Activated CD4-positive, alpha-beta T cell treated with anti-CD3 and anti-CD28 coated beads for 36 hours (primary cell): ENCODE measurements at regions of chr16 and their contacts with region 1.

Region 1: GRCh38 chr16:84084570-84085270 is 32.0 kb downstream of the MBTPS1 start:
- DNase-seq: peak; percentile 83
- ATAC-seq: peak; percentile 79
- H3K4me3 Mint-ChIP-seq: no peak overlapping the region
- H3K27ac Mint-ChIP-seq: no peak overlapping the region
- H3K4me1 Mint-ChIP-seq: peaks cover 40% of the 10 kb centered on the region
- H3K27me3 Mint-ChIP-seq: no peaks in the 10 kb centered on the region

Region 2: DNA sequence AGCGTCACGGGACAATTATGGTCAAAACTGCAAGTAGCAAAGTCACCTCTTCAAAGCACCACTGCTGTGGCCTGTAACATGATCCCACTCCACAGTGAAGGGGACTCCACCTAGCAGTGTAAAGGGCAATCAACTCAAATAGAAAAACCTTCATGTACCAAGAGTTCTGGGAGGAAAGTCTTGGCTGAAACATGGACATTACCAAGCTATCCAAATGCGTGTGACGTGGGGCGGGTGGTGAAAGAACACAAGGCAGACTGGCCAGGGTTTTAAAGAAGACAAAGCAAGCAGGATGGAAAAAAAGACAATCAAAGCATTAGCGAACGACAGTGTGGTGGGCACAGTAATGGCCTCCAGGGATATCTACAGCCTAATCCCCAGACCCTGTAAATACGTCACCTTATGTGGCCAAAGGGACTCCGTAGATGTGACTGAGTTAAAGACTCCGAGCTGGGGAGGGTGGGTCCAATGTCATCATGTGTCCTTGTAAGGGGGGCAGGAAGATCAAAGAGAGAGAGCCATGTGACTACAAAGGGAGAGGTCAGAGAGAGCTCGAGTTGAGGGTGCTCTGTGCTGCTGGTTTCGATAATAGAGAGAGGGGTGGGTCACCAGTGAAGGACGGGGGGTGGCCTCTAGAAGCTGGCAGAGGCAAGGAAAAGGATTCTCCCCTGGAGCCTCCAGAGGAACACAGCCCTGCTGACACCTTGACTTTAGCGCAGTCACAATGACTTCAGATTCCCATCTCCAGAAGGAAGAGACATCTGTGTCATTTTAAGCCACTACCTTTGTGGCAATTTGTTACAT is 54.3 kb after region 1 on chr16:
- CTCF ChIA-PET with region 1: interaction called, 5 read pairs
- POLR2A ChIA-PET with region 1: no interaction called
- intact Hi-C with region 1: loop called in 1 of 2 experiments (anchors 2 kb)
- DNase-seq: peak; percentile 59
- ATAC-seq: peak; percentile 96
- H3K4me3 Mint-ChIP-seq: no peak overlapping the region
- H3K27ac Mint-ChIP-seq: peak overlapping the region; percentile 32
- H3K4me1 Mint-ChIP-seq: peaks cover 49% of the 10 kb centered on the region
- H3K27me3 Mint-ChIP-seq: no peaks in the 10 kb centered on the region

Region 3: GRCh38 chr16:84175350-84176081 is 90.8 kb after region 1 on chr16:
- CTCF ChIA-PET with region 1: interaction called, 100 read pairs
- POLR2A ChIA-PET with region 1: no interaction called
- intact Hi-C with region 1: loop called (anchors 1 kb)
- DNase-seq: peak; percentile 81
- ATAC-seq: peak; percentile 93
- H3K4me3 Mint-ChIP-seq: no peak overlapping the region
- H3K27ac Mint-ChIP-seq: no peak overlapping the region
- H3K4me1 Mint-ChIP-seq: peaks cover 19% of the 10 kb centered on the region
- H3K27me3 Mint-ChIP-seq: peaks cover 2% of the 10 kb centered on the region

Region 4: GRCh38 chr16:84308120-84308519 is 223.4 kb after region 1 on chr16:
- CTCF ChIA-PET with region 1: interaction called, 9 read pairs
- POLR2A ChIA-PET with region 1: no interaction called
- intact Hi-C with region 1: loop called in 1 of 2 experiments (anchors 2 kb)
- DNase-seq: peak; percentile 48
- ATAC-seq: no peak
- H3K4me3 Mint-ChIP-seq: no peak overlapping the region
- H3K27ac Mint-ChIP-seq: no peak overlapping the region
- H3K4me1 Mint-ChIP-seq: no peaks in the 10 kb centered on the region
- H3K27me3 Mint-ChIP-seq: peaks cover 9% of the 10 kb centered on the region

Region 5: GRCh38 chr16:84331998-84332780 is 247.5 kb after region 1 on chr16:
- CTCF ChIA-PET with region 1: no interaction called
- POLR2A ChIA-PET with region 1: no interaction called
- intact Hi-C with region 1: no loop called
- DNase-seq: no peak
- ATAC-seq: no peak
- H3K4me3 Mint-ChIP-seq: no peak overlapping the region
- H3K27ac Mint-ChIP-seq: no peak overlapping the region
- H3K4me1 Mint-ChIP-seq: no peaks in the 10 kb centered on the region
- H3K27me3 Mint-ChIP-seq: peaks cover 5% of the 10 kb centered on the region